HepG2 (cell line): ENCODE measurements at regions of chr17 and their contacts with region 1.

Region 1: DNA sequence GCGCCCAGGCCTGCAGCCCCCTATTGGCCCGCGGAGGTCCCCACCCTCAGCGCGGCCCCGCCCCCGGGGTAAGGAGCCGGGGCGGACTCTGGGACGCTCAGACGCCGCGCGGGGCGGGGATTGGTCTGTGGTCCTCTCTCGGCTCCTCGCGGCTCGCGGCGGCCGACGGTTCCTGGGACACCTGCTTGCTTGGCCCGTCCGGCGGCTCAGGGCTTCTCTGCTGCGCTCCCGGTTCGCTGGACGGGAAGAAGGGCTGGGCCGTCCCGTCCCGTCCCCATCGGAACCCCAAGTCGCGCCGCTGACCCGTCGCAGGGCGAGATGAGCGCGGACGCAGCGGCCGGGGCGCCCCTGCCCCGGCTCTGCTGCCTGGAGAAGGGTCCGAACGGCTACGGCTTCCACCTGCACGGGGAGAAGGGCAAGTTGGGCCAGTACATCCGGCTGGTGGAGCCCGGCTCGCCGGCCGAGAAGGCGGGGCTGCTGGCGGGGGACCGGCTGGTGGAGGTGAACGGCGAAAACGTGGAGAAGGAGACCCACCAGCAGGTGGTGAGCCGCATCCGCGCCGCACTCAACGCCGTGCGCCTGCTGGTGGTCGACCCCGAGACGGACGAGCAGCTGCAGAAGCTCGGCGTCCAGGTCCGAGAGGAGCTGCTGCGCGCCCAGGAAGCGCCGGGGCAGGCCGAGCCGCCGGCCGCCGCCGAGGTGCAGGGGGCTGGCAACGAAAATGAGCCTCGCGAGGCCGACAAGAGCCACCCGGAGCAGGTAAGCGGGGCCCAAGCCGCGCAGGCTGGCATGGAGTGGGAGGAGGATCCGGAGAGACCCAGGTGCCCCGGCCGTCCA is at the start of gene NHERF1:
- DNase-seq: peak; percentile 88
- ATAC-seq: peak; percentile 65
- H3K4me3 ChIP-seq: peak within 1 kb of the TSS; percentile 95 to 99 (median 99)
- H3K27ac ChIP-seq: peak within 1 kb of the TSS; percentile 96
- H3K4me1 ChIP-seq: peaks cover 70% of the 10 kb centered on the region
- H3K27me3 ChIP-seq: no peaks in the 10 kb centered on the region; a peak in 1 of 5 replicates
- CTCF ChIP-seq: peak; percentile 57
- EP300 ChIP-seq: 0 out of 4 replicates have a peak, but pooled peaks of 1 of the 2 experiments have one; percentile 22
- POLR2A ChIP-seq: peak; percentile 99 to 100
- RAD21 ChIP-seq: peak; percentile 68
- total RNA-seq, gene NHERF1: 138 and 169 TPM in 2 replicates

Region 2: DNA sequence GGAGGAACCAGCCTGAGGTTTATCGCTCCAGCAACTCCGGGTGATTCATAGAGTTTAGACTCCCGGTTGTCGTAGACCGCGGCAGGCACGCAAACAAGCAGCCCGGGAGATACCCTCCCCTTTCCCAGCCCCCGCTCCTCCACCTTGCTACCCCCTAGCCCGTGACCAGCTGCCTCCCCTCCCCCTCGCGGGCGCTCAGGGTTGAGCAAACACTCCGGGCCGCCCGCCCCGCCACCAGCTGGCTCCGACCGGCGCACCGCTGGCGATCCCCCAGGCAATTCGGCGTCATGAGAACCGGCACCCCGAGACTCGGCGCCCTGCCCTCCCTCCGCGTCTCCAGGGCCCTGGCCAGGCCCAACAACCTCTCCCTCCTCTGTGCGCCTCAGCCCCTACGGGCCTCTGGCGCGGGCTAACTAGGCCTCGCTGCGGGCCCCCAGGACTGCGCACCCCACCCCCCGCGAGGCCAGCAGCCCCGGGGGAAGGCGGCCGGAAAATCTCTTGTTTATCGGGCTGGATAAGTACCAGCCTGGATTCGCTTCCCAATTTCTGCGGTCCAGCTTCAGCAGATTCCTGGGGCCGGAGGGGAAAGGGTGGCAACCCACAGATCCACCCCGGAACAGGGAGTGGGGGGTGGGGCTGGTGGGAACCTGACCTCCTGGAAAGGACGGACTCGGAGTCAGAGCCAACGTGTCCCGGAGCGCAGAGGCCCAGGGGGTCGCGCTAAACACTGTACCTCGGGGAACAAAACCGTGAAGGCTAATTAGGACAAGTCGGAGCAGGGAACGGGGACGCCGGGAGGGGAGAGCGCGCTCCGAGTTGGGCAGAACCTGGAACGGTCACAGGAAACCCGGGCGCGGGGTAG is 317.8 kb before region 1 on chr17:
- CTCF ChIA-PET with region 1: no interaction called
- POLR2A ChIA-PET with region 1: interaction called, 6 read pairs
- in situ Hi-C with region 1: loop called (anchors 10 kb)
- intact Hi-C with region 1: no loop called
- DNase-seq: peak; percentile 95
- ATAC-seq: peak; percentile 58
- H3K4me3 ChIP-seq: peak overlapping the region; percentile 82 to 94 (median 89)
- H3K27ac ChIP-seq: peak overlapping the region; percentile 98
- H3K4me1 ChIP-seq: peaks cover 69% of the 10 kb centered on the region
- H3K27me3 ChIP-seq: no peaks in the 10 kb centered on the region; a peak in 1 of 5 replicates
- CTCF ChIP-seq: peak; percentile 45
- EP300 ChIP-seq: peak in 1 of 2 experiments; percentile 55; a peak in 2 of 4 replicates
- POLR2A ChIP-seq: peak in 1 of 2 experiments; percentile 61; a peak in 3 of 4 replicates
- RAD21 ChIP-seq: peak; percentile 37

Region 3: DNA sequence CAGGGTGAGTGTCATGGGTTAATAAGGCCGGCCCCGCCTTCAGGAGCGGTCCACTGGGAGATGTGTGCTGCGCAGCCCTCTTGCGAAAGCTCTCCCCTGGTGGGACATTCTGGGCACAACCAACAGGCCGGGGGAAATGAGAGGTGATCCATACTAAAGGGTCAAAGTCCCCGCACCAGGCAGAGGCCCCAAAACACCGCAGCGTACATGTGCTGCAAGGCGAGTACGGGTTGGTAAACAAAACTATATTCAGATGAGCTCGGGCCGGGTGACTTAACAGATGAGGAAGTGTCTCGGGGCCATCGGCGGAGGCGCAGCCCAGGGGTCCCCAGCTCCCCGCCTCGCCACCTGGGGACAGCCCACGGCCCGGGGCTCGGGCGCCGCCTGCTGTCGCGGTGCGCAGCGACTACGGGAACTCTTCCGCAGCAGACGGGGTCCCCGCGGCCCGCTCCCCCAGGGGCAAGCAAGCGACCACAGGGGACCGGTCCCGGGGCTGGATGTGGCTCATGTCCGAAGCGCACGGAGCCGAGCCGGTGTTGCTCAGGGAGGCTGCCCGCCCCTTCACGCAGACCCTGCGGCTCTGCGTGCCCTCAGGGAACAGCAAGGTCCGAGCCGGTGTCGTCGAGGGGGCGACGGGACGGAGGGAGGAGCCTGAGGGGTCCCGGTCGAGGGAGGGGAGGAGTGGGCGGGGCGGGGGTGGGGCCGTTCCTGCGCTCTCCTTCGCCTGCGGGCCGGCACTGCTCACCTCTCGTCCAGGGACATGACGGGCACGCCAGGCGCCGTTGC is 12.0 kb before region 1 on chr17 and contains the start of gene RAB37:
- CTCF ChIA-PET with region 1: interaction called, 5 read pairs
- POLR2A ChIA-PET with region 1: interaction called, 221 read pairs
- in situ Hi-C with region 1: no loop called
- intact Hi-C with region 1: no loop called
- DNase-seq: peak; percentile 99
- ATAC-seq: peak; percentile 82
- H3K4me3 ChIP-seq: peak within 1 kb of the TSS; percentile 39 to 78 (median 67)
- H3K27ac ChIP-seq: peak within 1 kb of the TSS; percentile 69
- H3K4me1 ChIP-seq: peaks cover 59% of the 10 kb centered on the region
- H3K27me3 ChIP-seq: peaks cover 8 to 37% of the 10 kb centered on the region in 2 experiments; a peak in 4 of 5 replicates
- CTCF ChIP-seq: peak; percentile 81
- EP300 ChIP-seq: peak; percentile 85 to 87
- POLR2A ChIP-seq: peak; percentile 42 to 71
- RAD21 ChIP-seq: peak; percentile 87
- total RNA-seq, gene RAB37: 0.91 and 1.1 TPM in 2 replicates

Region 4: GRCh38 chr17:74770498-74771318 is 22.0 kb after region 1 on chr17:
- CTCF ChIA-PET with region 1: interaction called, 219 read pairs
- POLR2A ChIA-PET with region 1: interaction called, 1,459 read pairs
- in situ Hi-C with region 1: no loop called
- intact Hi-C with region 1: loop called (anchors 1 kb)
- DNase-seq: peak; percentile 81
- ATAC-seq: peak; percentile 78
- H3K4me3 ChIP-seq: no peak overlapping the region
- H3K27ac ChIP-seq: peak overlapping the region; percentile 52
- H3K4me1 ChIP-seq: peaks cover 94% of the 10 kb centered on the region
- H3K27me3 ChIP-seq: no peaks in the 10 kb centered on the region; a peak in 1 of 5 replicates
- CTCF ChIP-seq: peak; percentile 99
- EP300 ChIP-seq: peak in 1 of 2 experiments; percentile 28; a peak in 1 of 4 replicates
- POLR2A ChIP-seq: peak in 1 of 2 experiments; percentile 55; a peak in 2 of 4 replicates
- RAD21 ChIP-seq: peak; percentile 99

Region 5: GRCh38 chr17:74790161-74791054 is 41.7 kb after region 1 on chr17:
- CTCF ChIA-PET with region 1: interaction called, 15 read pairs
- POLR2A ChIA-PET with region 1: interaction called, 3 read pairs
- in situ Hi-C with region 1: no loop called
- intact Hi-C with region 1: no loop called
- DNase-seq: no peak
- ATAC-seq: no peak
- H3K4me3 ChIP-seq: no peak overlapping the region
- H3K27ac ChIP-seq: no peak overlapping the region
- H3K4me1 ChIP-seq: no peaks in the 10 kb centered on the region
- H3K27me3 ChIP-seq: no peaks in the 10 kb centered on the region
- CTCF ChIP-seq: no peak
- EP300 ChIP-seq: no peak
- POLR2A ChIP-seq: no peak
- RAD21 ChIP-seq: no peak